Transverse colon (tissue), 4 donors: ENCODE measurements at regions of chr9 and their contacts with region 1.

Region 1: GRCh38 chr9:83196946-83197345 is 134.0 kb upstream of the RASEF start:
- DNase-seq: no peak
- H3K4me3 ChIP-seq: no peak overlapping the region
- H3K27ac ChIP-seq: no peak overlapping the region
- H3K4me1 ChIP-seq: no peaks in the 10 kb centered on the region
- H3K27me3 ChIP-seq: peaks cover 11% of the 10 kb centered on the region
- CTCF ChIP-seq: no peak
- EP300 ChIP-seq: no peak
- POLR2A ChIP-seq: no peak

Region 2: GRCh38 chr9:83142389-83142788 is 54.6 kb before region 1 on chr9:
- in situ Hi-C with region 1: no loop called
- intact Hi-C with region 1: loop called (anchors 2 kb)
- DNase-seq: no peak
- H3K4me3 ChIP-seq: no peak overlapping the region
- H3K27ac ChIP-seq: no peak overlapping the region
- H3K4me1 ChIP-seq: no peaks in the 10 kb centered on the region
- H3K27me3 ChIP-seq: no peaks in the 10 kb centered on the region
- CTCF ChIP-seq: no peak
- EP300 ChIP-seq: no peak
- POLR2A ChIP-seq: no peak